Activated naive CD4-positive, alpha-beta T cell treated with anti-CD3 and anti-CD28 coated beads, Interleukin-2, amount 10 ng/mL, durations not matched to agents 7 days and 5 days (primary cell): ENCODE measurements at regions of chr2 and their contacts with region 1.

Region 1: DNA sequence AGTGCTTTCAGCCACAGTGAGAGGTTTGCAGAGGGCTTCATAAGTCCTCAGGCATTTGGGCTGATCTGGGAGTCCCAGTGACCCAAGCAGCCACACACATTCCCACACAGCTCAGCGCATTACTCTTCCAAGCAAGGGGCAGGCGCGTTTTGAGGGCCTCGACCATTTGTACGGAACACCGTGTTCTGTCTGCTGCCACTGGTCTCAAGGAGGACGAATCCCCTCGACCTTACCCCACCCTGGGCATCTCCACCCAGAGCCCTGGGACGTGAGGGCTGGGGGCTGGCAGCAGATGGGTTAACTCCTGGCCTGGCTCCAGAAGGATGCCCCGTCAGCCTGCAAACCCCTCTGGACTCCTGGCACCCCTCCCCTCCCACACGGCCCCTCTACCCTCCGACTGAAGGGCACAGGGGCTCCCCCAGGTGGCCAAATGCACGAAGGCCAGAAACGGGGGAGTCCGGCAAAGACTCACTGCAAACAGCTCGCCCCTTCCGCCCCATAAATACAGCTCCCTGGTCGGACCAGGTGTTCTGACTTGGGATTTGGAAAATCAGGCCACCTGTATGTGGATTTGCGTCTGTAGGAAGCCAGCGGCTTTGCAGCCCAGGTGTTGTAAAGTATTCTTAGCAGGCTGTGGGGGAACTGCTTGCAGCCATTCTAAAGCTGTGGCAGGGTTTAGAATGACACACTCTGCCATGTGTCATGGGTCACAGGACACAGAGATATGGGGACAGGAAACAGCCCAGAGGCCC is 33.6 kb upstream of the PTMA start:
- DNase-seq: peak; percentile 74
- H3K4me3 Mint-ChIP-seq: no peak overlapping the region
- H3K27ac Mint-ChIP-seq: no peak overlapping the region
- H3K4me1 Mint-ChIP-seq: peaks cover 39% of the 10 kb centered on the region
- H3K27me3 Mint-ChIP-seq: peaks cover 13% of the 10 kb centered on the region

Region 2: GRCh38 chr2:231056453-231057424 is 618.0 kb before region 1 on chr2 and contains the start of gene PSMD1:
- CTCF ChIA-PET with region 1: no interaction called
- DNase-seq: peak; percentile 94
- H3K4me3 Mint-ChIP-seq: peak within 1 kb of the TSS; percentile 97
- H3K27ac Mint-ChIP-seq: peak within 1 kb of the TSS; percentile 99
- H3K4me1 Mint-ChIP-seq: peaks cover 56% of the 10 kb centered on the region
- H3K27me3 Mint-ChIP-seq: peaks cover 30% of the 10 kb centered on the region

Region 3: GRCh38 chr2:231573698-231574421 is 100.9 kb before region 1 on chr2:
- CTCF ChIA-PET with region 1: no interaction called
- DNase-seq: no peak
- H3K4me3 Mint-ChIP-seq: no peak overlapping the region
- H3K27ac Mint-ChIP-seq: peak overlapping the region; percentile 55
- H3K4me1 Mint-ChIP-seq: peaks cover 2% of the 10 kb centered on the region
- H3K27me3 Mint-ChIP-seq: peaks cover 31% of the 10 kb centered on the region

Region 4: DNA sequence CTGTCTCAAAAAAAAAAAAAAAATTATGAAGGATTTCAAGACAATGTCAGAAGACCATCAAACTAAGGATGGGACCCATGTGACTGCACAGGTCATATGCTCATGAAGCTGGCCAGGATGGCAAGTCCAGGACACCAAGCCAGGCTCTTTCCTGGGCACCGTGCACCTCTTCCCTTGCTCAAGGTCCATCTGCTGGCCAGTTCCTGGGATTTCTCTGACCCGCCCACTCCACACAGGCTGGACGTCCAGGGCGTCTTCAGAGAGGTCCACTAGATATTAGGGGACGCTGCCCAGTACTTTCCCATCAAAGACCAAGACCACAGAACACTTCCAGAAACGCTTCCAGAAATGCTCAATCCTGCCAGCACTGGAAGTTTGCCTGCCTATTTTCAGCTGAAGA is 67.8 kb before region 1 on chr2:
- CTCF ChIA-PET with region 1: interaction called, 267 read pairs
- DNase-seq: no peak
- H3K4me3 Mint-ChIP-seq: no peak overlapping the region
- H3K27ac Mint-ChIP-seq: no peak overlapping the region
- H3K4me1 Mint-ChIP-seq: peaks cover 39% of the 10 kb centered on the region
- H3K27me3 Mint-ChIP-seq: peaks cover 29% of the 10 kb centered on the region

Region 5: GRCh38 chr2:231648587-231649174 is 26.1 kb before region 1 on chr2:
- CTCF ChIA-PET with region 1: interaction called, 74 read pairs
- DNase-seq: peak; percentile 75
- H3K4me3 Mint-ChIP-seq: no peak overlapping the region
- H3K27ac Mint-ChIP-seq: no peak overlapping the region
- H3K4me1 Mint-ChIP-seq: peaks cover 6% of the 10 kb centered on the region
- H3K27me3 Mint-ChIP-seq: peaks cover 28% of the 10 kb centered on the region

Region 6: GRCh38 chr2:231687133-231687852 is 12.5 kb after region 1 on chr2:
- CTCF ChIA-PET with region 1: interaction called, 29 read pairs
- DNase-seq: peak; percentile 74
- H3K4me3 Mint-ChIP-seq: no peak overlapping the region
- H3K27ac Mint-ChIP-seq: no peak overlapping the region
- H3K4me1 Mint-ChIP-seq: peaks cover 7% of the 10 kb centered on the region
- H3K27me3 Mint-ChIP-seq: peaks cover 58% of the 10 kb centered on the region

Region 7: DNA sequence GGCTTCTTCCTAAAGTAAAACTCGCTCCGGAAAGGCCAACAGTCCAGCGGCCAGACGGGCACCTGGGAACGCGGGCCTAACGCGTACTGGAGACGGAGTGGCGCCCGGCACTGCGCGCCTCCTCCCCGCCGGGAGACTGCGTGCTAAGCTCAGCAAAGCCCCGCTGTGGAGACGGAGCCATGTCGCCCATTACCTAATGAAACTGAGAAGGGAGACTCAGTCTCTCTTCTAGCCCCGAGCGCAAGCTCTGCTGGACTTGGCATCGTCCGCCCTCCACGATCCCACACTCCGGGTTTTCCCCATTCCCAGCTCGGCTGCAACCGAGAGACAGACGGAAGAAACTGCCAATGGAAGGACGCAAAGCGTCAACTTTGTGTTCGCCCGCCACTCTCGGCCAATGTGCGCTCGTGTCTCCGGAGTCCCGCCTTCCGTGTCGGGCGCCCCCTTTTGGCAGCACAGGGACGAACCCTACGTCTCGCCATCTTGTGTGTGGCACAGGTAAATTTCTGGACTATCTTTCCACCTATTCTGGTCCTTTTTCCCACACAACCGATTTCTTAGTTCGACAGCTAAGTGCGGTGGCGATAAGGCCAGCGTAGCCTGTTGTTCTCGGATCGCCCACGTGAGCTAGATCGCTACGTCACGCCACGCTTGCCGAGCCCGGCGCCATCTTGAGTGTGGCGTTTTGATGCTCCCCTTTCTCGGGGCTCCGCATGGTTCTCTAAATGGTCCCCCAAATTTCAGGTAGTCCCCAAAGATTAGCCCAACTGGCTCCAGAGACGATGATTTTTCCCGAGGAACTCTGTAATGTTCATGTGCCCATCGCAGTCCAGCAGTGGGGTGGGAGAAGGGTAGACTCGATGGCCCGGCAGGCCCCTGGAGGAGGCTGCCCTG is 32.2 kb after region 1 on chr2:
- CTCF ChIA-PET with region 1: interaction called, 473 read pairs
- DNase-seq: peak; percentile 98
- H3K4me3 Mint-ChIP-seq: peak overlapping the region; percentile 93
- H3K27ac Mint-ChIP-seq: peak overlapping the region; percentile 100
- H3K4me1 Mint-ChIP-seq: peaks cover 30% of the 10 kb centered on the region
- H3K27me3 Mint-ChIP-seq: peaks cover 6% of the 10 kb centered on the region

Region 8: GRCh38 chr2:231727621-231728020 is 52.9 kb after region 1 on chr2:
- CTCF ChIA-PET with region 1: interaction called, 11 read pairs
- DNase-seq: no peak
- H3K4me3 Mint-ChIP-seq: no peak overlapping the region
- H3K27ac Mint-ChIP-seq: no peak overlapping the region
- H3K4me1 Mint-ChIP-seq: peaks cover 2% of the 10 kb centered on the region
- H3K27me3 Mint-ChIP-seq: no peaks in the 10 kb centered on the region

Region 9: DNA sequence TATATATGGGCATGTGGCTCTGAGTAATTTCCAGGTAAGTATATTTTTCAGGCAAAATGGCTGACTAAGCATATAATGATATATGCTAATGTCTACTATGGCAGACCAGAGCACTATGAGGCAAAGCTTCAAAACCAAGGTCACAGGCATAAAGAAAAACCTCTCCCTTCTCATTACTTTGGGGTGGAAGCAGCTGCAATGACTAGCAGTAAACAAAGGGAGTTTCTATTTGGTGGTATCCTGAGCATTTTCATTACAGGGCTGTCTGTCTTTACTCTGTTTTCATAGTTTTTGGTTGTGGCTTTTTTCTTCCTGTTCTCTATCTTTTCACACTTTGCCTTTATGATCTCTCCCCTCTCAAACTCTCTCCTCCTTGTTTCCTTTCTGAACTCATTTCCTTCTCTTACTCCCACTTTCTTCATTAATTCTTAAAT is 90.8 kb after region 1 on chr2:
- CTCF ChIA-PET with region 1: no interaction called
- DNase-seq: no peak
- H3K4me3 Mint-ChIP-seq: no peak overlapping the region
- H3K27ac Mint-ChIP-seq: peak overlapping the region; percentile 0
- H3K4me1 Mint-ChIP-seq: peaks cover 39% of the 10 kb centered on the region
- H3K27me3 Mint-ChIP-seq: no peaks in the 10 kb centered on the region